ENCODE measurements at regions of chr1 and their contacts with region 1.

Region 1: DNA sequence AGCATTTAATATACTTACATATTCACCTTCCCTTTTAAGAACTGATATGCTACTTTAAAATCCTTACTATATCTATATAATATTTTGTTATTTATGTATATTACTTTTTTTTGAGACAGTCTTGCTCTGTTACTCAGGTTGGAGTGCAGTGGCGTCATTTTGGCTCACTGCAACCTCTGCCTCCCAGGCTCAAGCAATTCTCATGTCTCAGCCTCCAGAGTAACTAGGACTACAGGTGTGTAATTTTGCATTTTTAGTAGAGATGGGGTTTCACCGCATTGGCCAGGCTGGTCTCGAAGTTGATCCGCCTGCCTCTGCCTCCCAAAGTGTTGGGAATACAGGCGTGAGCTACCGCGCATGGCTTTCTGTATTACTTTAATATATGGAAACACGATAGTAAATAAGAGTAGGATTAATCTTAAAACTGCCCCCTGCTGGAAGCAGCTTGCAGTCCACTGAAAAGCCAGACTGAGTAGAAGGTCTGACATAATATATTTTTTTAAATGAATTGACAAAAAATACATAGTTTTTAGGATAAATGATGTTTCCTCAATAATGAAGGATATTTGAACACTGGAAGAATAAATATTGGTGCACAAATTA is 24.4 kb downstream of the RCAN3 start:
- DNase-seq: peak; percentile 16
- ATAC-seq: peak; percentile 82
- H3K4me3 ChIP-seq: no peak overlapping the region
- H3K27ac ChIP-seq: no peak overlapping the region
- H3K4me1 ChIP-seq: no peaks in the 10 kb centered on the region
- H3K27me3 ChIP-seq: no peaks in the 10 kb centered on the region
- CTCF ChIP-seq: peak; percentile 52 to 72 (median 67); a peak in 5 of 6 replicates
- POLR2A ChIP-seq: no peak
- RAD21 ChIP-seq: peak; percentile 60

Region 2: DNA sequence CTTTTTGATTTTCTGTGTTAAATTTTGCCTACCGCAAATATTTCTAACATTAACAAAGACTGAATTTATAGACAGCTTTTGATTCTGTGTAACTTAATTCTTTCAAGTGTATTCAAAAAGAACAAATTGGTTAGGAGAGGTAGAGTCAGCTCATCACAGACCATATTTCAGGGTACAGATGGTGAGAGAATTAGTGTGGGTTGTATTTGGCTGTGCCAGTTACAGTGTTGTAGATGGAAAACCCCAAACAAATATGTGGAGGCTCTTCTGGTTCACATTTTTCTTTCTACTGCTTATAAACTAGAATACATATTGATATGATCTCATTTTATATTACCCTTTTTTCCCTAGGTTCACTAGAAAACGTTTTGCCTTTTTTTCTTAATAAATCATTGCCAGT is 13.3 kb before region 1 on chr1:
- CTCF ChIA-PET with region 1: interaction called, 17 read pairs
- POLR2A ChIA-PET with region 1: no interaction called
- RAD21 ChIA-PET with region 1: no interaction called
- intact Hi-C with region 1: no loop called
- DNase-seq: no peak
- ATAC-seq: no peak
- H3K4me3 ChIP-seq: no peak overlapping the region
- H3K27ac ChIP-seq: no peak overlapping the region
- H3K4me1 ChIP-seq: peaks cover 18 to 19% of the 10 kb centered on the region in 2 experiments
- H3K27me3 ChIP-seq: no peaks in the 10 kb centered on the region
- CTCF ChIP-seq: no peak
- POLR2A ChIP-seq: no peak
- RAD21 ChIP-seq: no peak

Measured in HCT116 (cell line).